PC-3 (cell line): ENCODE measurements at regions of chr11 and their contacts with region 1.

Region 1: GRCh38 chr11:11615086-11615485 is 6.7 kb downstream of the GALNT18 start:
- DNase-seq: peak; percentile 42
- ATAC-seq: peak; percentile 62
- H3K4me3 ChIP-seq: no peak overlapping the region
- H3K27ac ChIP-seq: peak overlapping the region; percentile 47
- H3K4me1 ChIP-seq: peaks cover 20% of the 10 kb centered on the region
- H3K27me3 ChIP-seq: no peaks in the 10 kb centered on the region
- CTCF ChIP-seq: no peak

Region 2: GRCh38 chr11:11370255-11370961 is 244.7 kb before region 1 on chr11:
- CTCF ChIA-PET with region 1: no interaction called
- POLR2A ChIA-PET with region 1: no interaction called
- intact Hi-C with region 1: no loop called
- DNase-seq: no peak
- ATAC-seq: no peak
- H3K4me3 ChIP-seq: no peak overlapping the region
- H3K27ac ChIP-seq: no peak overlapping the region
- H3K4me1 ChIP-seq: no peaks in the 10 kb centered on the region
- H3K27me3 ChIP-seq: no peaks in the 10 kb centered on the region
- CTCF ChIP-seq: no peak

Region 3: GRCh38 chr11:11422411-11423128 is 192.5 kb before region 1 on chr11:
- CTCF ChIA-PET with region 1: no interaction called
- POLR2A ChIA-PET with region 1: no interaction called
- intact Hi-C with region 1: no loop called
- DNase-seq: peak; percentile 38
- ATAC-seq: peak; percentile 48
- H3K4me3 ChIP-seq: no peak overlapping the region
- H3K27ac ChIP-seq: no peak overlapping the region
- H3K4me1 ChIP-seq: peaks cover 21% of the 10 kb centered on the region
- H3K27me3 ChIP-seq: no peaks in the 10 kb centered on the region
- CTCF ChIP-seq: no peak

Region 4: DNA sequence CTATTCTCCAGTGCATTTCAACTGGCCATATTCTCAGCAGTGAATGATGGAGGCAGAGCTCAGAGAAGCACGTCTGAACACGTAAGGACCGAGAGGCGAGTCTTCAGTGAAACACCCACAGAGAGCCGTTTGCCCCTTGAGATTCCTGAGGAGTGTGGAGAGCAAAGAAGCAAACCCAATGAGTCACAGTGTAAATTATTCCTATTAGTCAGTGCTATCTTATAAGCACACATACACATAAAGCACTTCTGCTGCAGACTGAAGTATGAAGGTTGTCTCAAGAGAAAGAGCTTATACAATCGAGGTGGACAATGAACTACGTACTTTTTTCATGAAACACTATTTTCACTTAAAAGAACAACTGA is 30.7 kb before region 1 on chr11:
- CTCF ChIA-PET with region 1: no interaction called
- POLR2A ChIA-PET with region 1: no interaction called
- intact Hi-C with region 1: loop called (anchors 2 kb)
- DNase-seq: peak; percentile 92
- ATAC-seq: peak; percentile 98
- H3K4me3 ChIP-seq: peak overlapping the region; percentile 56
- H3K27ac ChIP-seq: peak overlapping the region; percentile 75
- H3K4me1 ChIP-seq: peaks cover 40% of the 10 kb centered on the region
- H3K27me3 ChIP-seq: no peaks in the 10 kb centered on the region
- CTCF ChIP-seq: no peak